Cardiac septum (tissue), 1 donor: ENCODE measurements at regions of chr1 and their contacts with region 1.

Region 1: GRCh38 chr1:21261551-21262281 is 28.5 kb downstream of the ECE1 start:
- DNase-seq: peak; percentile 92

Region 2: DNA sequence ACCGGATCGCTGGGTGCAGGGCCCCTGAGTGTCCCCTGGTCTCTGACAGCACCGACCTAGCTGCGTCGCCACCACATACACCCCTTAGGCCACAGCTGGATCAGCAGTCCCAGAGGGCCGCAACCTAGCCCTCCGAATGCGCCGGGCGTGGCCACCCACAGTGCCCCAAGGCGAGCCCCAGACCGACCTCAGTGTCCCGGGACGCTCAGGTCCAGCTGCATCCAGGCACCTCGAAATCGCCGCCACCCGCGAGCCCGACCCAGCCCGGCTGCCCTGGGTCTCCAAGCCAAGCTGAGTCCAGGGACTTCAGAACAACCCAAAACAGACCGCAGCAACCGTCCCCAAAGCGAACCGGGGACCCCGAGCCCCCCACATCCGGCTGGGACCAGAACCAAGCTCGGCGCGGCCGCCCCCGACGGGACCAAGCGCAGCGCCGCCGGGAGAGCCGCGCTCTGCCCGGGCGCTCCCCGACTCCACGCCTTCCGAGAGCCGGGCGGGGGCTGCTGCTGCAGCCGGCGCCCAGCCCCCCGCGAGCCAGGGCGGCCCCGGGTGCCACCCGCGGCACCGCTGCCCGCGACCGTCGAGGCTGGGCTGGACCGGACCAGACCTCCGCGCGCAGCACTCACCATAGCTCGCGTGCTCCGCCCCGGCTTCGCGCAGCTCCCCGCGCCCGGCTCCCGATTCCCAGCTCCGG is 83.2 kb after region 1 on chr1:
- intact Hi-C with region 1: loop called (anchors 2 kb)
- DNase-seq: no peak

Region 3: DNA sequence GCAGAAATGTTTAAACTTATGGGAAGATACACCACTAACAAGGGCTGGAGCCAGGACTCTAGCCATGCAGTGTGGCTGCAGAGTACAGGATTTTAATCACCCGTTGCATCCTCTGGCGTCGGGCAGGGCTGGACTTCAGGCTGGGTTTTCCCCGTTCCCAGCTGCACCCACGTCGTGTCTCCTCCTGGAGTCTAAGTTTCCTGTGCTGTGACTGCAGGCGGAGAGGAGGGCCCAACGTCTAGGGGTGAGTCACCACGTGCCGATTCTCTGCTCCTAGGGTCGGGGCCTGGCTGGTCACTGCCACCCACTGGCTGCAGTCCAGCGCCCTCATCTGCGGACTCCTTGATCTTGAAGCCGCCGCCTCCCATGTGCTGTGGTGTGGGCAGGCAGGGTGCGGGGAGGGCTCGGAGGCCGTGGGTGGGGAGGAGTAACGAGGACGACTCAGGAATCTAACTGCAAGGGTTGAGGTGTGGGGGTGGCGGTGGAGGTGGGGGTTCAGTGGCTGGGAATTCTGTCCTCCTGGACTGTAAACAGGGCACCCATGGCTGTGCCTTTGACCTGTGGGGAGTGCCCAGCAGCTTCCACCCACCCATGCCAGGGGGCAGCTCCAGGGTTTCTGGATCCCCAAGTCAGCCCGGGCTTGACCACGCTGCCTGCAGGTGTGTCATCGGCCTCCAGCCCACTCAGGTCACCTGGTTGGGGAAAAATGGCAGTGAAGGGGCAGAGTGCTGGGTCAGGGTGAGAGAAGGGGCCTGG is 325.3 kb after region 1 on chr1:
- intact Hi-C with region 1: loop called (anchors 5 kb)
- DNase-seq: peak; percentile 87